ENCODE measurements at regions of chr16 and their contacts with region 1.

Region 1: GRCh38 chr16:10895053-10895946 is 18.3 kb downstream of the CIITA start:
- DNase-seq: peak; percentile 60
- ATAC-seq: no peak
- H3K4me3 Mint-ChIP-seq: peak overlapping the region; percentile 67
- H3K27ac Mint-ChIP-seq: peak overlapping the region; percentile 91
- H3K4me1 Mint-ChIP-seq: peaks cover 99% of the 10 kb centered on the region
- H3K27me3 Mint-ChIP-seq: no peaks in the 10 kb centered on the region
- CTCF ChIP-seq: no peak

Region 2: GRCh38 chr16:10883004-10883403 is 12.3 kb before region 1 on chr16:
- CTCF ChIA-PET with region 1: interaction called, 76 read pairs
- POLR2A ChIA-PET with region 1: interaction called, 318 read pairs
- intact Hi-C with region 1: no loop called
- DNase-seq: no peak
- ATAC-seq: no peak
- H3K4me3 Mint-ChIP-seq: peak overlapping the region; percentile 55
- H3K27ac Mint-ChIP-seq: peak overlapping the region; percentile 87
- H3K4me1 Mint-ChIP-seq: peaks cover 81% of the 10 kb centered on the region
- H3K27me3 Mint-ChIP-seq: no peaks in the 10 kb centered on the region
- CTCF ChIP-seq: no peak